Activated CD4-positive, alpha-beta memory T cell treated with anti-CD3 and anti-CD28 coated beads, Interleukin-2, amount 10 ng/mL, durations not matched to agents 7 days and 5 days (primary cell): ENCODE measurements at regions of chr1 and their contacts with region 1.

Region 1: GRCh38 chr1:109426278-109427170 is at the start of gene PSMA5:
- DNase-seq: peak; percentile 97
- H3K4me3 Mint-ChIP-seq: peak within 1 kb of the TSS; percentile 96
- H3K27ac Mint-ChIP-seq: peak within 1 kb of the TSS; percentile 99
- H3K4me1 Mint-ChIP-seq: peaks cover 35% of the 10 kb centered on the region
- H3K27me3 Mint-ChIP-seq: no peaks in the 10 kb centered on the region
- total RNA-seq, gene PSMA5: 170 to 189 TPM

Region 2: GRCh38 chr1:109099938-109100773 is 326.4 kb before region 1 on chr1:
- CTCF ChIA-PET with region 1: interaction called, 3 read pairs
- POLR2A ChIA-PET with region 1: interaction called, 12 read pairs
- DNase-seq: peak; percentile 97
- H3K4me3 Mint-ChIP-seq: peak overlapping the region; percentile 99
- H3K27ac Mint-ChIP-seq: peak overlapping the region; percentile 94
- H3K4me1 Mint-ChIP-seq: peaks cover 12% of the 10 kb centered on the region
- H3K27me3 Mint-ChIP-seq: no peaks in the 10 kb centered on the region

Region 3: GRCh38 chr1:109133815-109134214 is 292.7 kb before region 1 on chr1:
- CTCF ChIA-PET with region 1: no interaction called
- POLR2A ChIA-PET with region 1: no interaction called
- DNase-seq: no peak
- H3K4me3 Mint-ChIP-seq: no peak overlapping the region
- H3K27ac Mint-ChIP-seq: no peak overlapping the region
- H3K4me1 Mint-ChIP-seq: peaks cover 6% of the 10 kb centered on the region
- H3K27me3 Mint-ChIP-seq: no peaks in the 10 kb centered on the region

Region 4: DNA sequence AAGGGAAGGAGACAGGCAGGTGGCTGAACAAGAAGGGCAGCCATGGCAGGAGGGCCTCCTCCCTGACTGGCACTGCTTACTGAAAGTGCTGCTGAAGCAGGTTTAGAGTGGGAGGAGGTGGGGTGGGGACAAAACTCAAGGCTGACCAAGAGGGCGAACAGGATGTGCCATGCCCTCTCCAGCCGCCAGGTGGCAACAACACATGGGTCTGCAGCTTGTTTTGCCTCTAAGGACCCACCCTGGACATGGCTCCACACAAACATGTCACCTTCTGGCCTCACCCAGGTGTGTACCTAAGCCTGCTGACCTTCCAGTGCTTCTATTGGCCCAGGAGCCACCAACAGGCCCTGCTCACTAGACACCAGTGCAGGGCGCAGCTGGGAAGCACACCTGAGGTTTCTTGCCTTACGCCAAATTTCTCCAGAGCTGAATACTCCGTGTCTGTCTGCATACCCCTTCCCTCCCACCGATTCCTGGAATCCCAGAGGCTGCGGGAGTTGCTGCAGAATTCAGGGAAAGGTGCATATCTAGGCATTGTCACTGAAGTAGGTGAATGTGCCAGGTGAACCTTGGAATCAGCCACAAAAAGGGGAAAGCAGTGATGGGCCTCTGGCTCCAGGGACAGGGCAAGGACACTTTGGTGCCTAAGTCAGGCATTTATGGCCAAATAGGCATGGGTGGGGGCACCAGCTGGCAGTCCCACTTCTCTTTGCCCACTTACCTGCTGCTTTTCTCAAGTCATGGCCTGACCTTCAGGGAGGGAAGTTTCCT is 148.9 kb before region 1 on chr1:
- CTCF ChIA-PET with region 1: interaction called, 6 read pairs
- POLR2A ChIA-PET with region 1: interaction called, 27 read pairs
- DNase-seq: peak; percentile 77
- H3K4me3 Mint-ChIP-seq: no peak overlapping the region
- H3K27ac Mint-ChIP-seq: peak overlapping the region; percentile 24
- H3K4me1 Mint-ChIP-seq: peaks cover 37% of the 10 kb centered on the region
- H3K27me3 Mint-ChIP-seq: no peaks in the 10 kb centered on the region

Region 5: DNA sequence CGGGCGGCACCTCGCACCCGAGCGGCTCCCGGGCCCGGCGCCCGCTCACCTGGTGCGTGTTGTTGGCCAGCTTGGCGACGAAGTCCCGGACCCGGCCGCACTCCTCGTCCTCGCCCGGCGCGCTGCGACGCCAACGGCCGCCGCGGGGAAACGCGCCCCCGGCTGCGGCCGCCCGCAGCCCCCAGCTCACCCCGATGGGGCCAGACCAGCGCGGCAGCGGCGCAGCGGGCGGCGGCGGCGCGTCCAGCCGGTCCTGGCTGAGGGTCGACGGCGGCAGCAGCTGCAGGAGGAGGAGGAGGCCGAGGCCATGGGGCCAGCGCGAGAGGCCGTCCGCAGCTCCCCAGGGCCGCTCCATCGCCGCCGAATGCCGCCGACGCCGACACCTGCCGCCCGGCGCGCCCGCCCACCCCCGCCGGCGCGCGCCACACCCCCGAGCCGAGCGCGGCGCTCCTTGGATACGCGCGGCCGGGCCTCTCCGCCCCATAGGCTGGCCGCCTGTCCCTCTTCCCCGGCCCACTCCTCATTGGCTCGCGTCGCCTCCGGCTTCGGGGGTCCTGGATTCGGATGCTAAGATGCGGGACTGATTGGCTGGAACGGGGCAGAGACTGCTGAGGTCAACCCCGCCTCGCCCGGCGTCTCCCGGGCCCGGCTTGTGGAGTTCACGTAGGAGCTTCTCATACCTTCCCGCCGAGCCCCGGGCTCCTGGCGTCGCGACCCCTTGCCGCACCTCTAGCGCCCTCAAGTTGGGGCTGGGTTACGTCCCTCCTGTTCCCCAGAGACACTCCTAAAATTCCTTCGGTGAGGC is 28.8 kb before region 1 on chr1 and contains the start of gene SORT1:
- CTCF ChIA-PET with region 1: interaction called, 6 read pairs
- POLR2A ChIA-PET with region 1: interaction called, 31 read pairs
- DNase-seq: peak; percentile 55
- H3K4me3 Mint-ChIP-seq: peak within 1 kb of the TSS; percentile 72
- H3K27ac Mint-ChIP-seq: no peak within 1 kb of the TSS
- H3K4me1 Mint-ChIP-seq: peaks cover 14% of the 10 kb centered on the region
- H3K27me3 Mint-ChIP-seq: peaks cover 43% of the 10 kb centered on the region
- total RNA-seq, gene SORT1: 3.2 to 4.5 TPM

Region 6: GRCh38 chr1:109412551-109412950 is 14.0 kb before region 1 on chr1:
- CTCF ChIA-PET with region 1: no interaction called
- POLR2A ChIA-PET with region 1: interaction called, 13 read pairs
- DNase-seq: no peak
- H3K4me3 Mint-ChIP-seq: no peak overlapping the region
- H3K27ac Mint-ChIP-seq: no peak overlapping the region
- H3K4me1 Mint-ChIP-seq: peaks cover 12% of the 10 kb centered on the region
- H3K27me3 Mint-ChIP-seq: no peaks in the 10 kb centered on the region

Region 7: DNA sequence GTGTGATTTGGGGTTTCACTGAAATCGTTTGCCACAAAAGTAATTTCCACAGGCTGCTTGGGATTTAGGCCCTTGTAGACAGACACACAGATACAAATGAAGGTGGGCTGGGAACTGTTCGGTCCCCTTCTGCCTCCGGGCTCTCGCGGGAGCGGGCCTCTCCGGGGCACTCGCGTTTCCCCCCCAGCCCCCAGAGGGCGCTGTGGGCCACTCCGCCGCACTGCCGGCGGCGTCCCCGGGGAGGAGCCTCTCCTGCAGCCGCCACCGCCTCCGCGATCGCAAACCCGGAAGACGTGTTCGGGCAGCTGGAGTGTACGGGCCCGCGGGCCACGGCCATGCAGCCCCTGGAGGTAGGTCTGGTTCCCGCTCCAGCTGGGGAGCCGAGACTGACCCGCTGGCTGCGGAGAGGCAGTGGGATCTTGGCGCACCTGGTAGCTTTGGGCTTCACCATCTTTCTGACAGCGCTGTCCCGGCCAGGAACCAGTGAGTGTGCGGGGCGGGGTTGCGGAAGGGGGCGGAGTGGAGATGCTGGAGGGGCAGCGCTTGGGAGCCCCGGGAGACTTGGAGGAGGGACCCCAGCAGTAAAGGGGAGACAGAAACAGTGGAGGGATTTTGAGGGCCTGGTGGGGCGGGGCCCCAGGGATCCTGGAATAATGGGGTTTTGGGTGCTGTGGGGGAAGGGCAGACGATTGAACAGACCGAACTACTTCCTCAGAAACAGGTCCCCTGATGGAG is 67.4 kb after region 1 on chr1 and contains the start of gene CYB561D1:
- CTCF ChIA-PET with region 1: interaction called, 6 read pairs
- POLR2A ChIA-PET with region 1: interaction called, 20 read pairs
- DNase-seq: peak; percentile 91
- H3K4me3 Mint-ChIP-seq: peak within 1 kb of the TSS; percentile 96
- H3K27ac Mint-ChIP-seq: peak within 1 kb of the TSS; percentile 82
- H3K4me1 Mint-ChIP-seq: peaks cover 42% of the 10 kb centered on the region
- H3K27me3 Mint-ChIP-seq: no peaks in the 10 kb centered on the region
- total RNA-seq, gene CYB561D1: 19.5 to 21.4 TPM

Region 8: DNA sequence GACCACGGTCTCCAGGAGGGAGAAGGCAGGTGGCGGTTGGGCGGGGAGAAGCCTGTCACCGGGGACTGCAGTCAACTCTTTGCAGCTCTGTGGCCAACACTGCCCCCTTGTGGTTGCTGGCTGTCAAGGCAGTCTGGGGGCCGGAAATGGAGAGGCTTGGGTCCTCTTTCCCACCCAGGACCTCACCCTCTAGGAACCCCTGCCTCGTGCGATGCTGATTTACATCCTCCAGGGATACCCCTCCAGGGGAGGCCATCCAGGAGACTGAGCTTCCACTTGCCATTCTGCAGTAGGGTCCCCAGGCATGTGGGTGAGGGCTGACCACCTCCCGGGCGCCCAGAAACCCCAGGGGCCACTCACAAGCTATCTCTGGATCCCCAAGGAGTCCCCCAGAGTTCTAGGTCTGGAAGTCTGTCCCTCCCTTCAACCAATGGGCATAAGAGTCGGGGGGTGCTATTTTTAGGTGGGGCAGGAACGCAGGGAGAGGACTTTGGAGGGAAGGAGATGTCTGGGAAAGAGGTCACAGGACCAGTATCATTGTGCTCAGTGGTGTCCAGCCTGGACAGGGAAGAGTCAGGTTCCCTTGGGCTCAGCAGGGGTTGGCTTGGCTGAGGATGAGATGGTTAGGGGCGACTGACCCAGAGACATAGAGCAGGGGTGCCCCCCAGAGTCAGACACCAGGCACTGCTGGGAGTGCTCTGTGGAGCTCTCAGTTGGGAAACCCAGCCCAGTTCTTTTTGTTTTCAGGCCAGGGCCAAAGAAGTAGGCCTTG is 106.0 kb after region 1 on chr1:
- CTCF ChIA-PET with region 1: interaction called, 35 read pairs
- POLR2A ChIA-PET with region 1: interaction called, 14 read pairs
- DNase-seq: peak; percentile 92
- H3K4me3 Mint-ChIP-seq: peak overlapping the region; percentile 48
- H3K27ac Mint-ChIP-seq: peak overlapping the region; percentile 90
- H3K4me1 Mint-ChIP-seq: peaks cover 22% of the 10 kb centered on the region
- H3K27me3 Mint-ChIP-seq: no peaks in the 10 kb centered on the region